Right cardiac atrium (tissue), 5 donors: ENCODE measurements at regions of chr15 and their contacts with region 1.

Region 1: GRCh38 chr15:85504749-85505676 is 124.6 kb downstream of the AKAP13 start:
- DNase-seq: no peak
- ATAC-seq: peak; percentile 52 to 56
- H3K4me3 ChIP-seq: no peak overlapping the region
- H3K27ac ChIP-seq: peak overlapping the region; percentile 88
- H3K4me1 ChIP-seq: peaks cover 7% of the 10 kb centered on the region
- H3K27me3 ChIP-seq: no peaks in the 10 kb centered on the region

Region 2: DNA sequence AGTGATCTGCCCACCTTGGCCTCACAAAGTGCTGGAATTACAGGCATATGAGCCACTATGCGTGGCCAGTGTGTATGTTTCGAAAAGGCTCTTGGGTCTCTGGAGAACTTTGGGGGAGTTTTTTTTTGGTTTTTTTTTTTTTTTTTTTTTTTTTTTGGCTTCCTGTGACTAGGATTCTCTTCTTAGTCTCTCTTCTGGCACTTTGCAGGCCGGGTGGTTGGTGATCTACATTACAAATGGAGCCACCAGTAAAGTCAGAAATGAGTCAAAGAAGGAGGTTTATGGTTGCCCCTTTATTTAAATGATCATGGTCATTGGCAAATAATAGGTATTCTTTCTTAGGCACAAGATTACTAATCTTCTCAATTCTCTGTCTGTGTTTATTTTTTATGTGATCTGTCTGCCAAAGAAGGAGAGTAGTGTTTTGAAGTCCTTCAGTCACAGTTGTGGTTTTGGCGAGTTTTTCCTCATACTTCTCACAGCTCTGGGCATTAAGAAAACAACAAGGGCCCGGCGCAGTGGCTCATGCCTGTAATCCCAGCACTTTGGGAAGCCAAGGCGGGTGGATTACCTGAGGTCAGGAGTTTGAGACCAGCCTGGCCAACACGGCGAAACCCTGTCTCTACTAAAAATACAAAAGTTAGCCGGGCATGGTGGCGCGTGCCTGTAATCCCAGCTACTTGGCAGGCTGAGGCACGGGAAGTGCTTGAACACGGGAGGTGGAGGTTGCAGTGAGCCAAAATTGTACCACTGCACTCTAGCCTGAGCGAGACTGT is 485.0 kb before region 1 on chr15:
- intact Hi-C with region 1: no loop called
- DNase-seq: no peak
- ATAC-seq: no peak
- H3K4me3 ChIP-seq: no peak overlapping the region
- H3K27ac ChIP-seq: no peak overlapping the region
- H3K4me1 ChIP-seq: peaks cover 2% of the 10 kb centered on the region
- H3K27me3 ChIP-seq: no peaks in the 10 kb centered on the region

Region 3: DNA sequence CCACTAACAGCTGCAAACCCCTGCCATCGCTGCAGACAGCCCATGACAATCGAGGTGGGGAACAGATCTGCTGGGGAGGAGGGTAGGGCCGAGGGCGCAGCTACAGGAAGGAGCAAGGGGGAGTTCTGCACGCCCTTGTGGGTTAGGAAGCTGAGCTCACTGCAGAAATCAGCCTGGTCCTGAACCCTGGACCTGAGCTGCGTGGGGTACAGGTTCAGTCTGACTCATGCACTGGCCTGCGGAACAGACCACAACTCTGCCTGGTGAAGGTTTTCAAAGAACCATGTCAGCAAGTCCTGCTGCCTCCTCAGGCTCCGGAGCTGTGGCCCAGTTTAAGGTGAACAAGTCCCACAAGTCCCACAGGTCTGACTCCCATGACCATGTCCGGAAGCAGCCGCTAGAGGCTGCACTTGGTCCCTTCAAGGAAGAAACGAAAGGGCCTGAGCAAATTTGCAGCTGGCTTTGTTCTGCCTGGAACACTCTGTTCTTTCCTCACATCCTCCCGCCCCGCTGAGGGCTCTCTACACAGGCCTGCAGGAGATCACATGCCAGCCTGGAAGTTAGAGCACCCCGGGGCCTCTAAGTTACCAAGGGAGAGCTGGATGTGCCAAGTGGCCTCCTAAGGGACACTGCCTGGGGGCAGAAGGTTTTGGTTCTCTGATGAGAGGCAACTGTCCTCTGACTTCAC is 174.0 kb before region 1 on chr15:
- intact Hi-C with region 1: loop called in 2 of 4 experiments (anchors 10 kb)
- DNase-seq: peak; percentile 87 to 95 (median 89)
- ATAC-seq: peak; percentile 95
- H3K4me3 ChIP-seq: no peak overlapping the region
- H3K27ac ChIP-seq: peak overlapping the region; percentile 94
- H3K4me1 ChIP-seq: peaks cover 9% of the 10 kb centered on the region
- H3K27me3 ChIP-seq: no peaks in the 10 kb centered on the region

Region 4: DNA sequence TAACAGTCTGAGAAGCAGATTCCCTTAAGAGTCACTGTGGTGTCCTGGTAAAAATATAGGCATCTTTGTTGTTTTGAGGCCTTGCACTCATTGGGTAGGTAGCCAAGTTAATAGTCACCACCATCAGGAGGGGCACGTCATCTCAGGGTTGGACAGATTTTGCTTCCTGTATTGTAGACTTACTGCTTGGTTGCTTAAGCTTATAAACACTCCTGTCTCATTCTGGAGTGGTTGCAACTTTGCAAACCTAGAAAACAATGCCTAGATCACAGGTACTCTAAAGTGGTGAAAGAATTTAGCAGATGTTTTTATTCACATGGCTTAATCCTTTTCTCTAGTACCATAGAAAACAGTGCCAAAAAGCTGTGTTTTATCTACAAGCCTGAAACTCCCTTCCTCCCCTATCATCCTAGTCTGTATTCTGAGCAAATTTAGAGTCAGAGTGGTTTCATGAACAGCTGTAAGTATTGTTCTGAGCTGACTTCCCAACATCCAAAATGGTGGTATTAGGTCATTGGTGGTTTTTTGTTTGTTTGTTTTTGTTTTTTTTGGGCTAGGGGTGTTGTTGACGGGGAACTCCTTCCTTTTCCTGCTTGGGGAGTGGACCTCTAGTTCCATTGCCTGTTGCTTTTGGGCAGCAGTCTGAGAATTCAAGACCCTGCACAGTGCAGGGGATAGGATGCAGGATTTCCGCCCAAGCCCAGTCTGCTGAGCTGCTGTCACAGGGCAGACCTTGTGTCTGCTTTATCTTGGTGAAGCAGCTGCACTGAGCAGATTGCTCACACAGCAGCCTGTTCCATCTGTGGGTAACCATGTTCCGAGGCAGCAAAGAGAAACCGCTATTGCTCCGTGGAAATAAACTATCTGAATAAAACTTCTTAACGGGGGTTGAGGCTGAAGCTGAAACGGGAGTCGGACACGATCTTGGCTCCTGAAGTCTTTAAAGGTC is 77.4 kb after region 1 on chr15:
- intact Hi-C with region 1: loop called in 2 of 4 experiments (anchors 5 to 10 kb)
- DNase-seq: peak; percentile 68 to 87 (median 83)
- ATAC-seq: peak; percentile 78 to 82
- H3K4me3 ChIP-seq: peak overlapping the region; percentile 95
- H3K27ac ChIP-seq: peak overlapping the region; percentile 99
- H3K4me1 ChIP-seq: peaks cover 34% of the 10 kb centered on the region
- H3K27me3 ChIP-seq: no peaks in the 10 kb centered on the region

Region 5: DNA sequence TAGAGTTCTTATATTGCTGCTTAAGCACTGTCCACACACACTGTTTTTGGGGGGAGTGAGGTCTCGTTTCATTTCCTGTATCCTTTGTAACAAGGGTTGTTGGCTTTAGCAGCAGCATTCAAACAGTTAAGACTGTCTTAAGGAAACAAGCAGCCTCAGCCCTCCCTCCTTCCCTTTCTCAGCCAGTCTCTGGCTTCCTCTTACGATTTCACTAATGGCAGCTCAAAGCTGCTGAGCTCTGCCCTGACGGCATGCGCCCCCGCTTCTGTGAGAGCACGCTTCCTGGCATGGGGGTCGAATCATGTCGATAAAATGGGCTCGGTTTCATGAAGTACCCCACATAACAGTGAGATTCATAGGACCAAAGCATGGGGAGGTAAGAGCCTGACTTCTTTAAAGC is 184.7 kb after region 1 on chr15:
- intact Hi-C with region 1: no loop called
- DNase-seq: peak in 2 of 3 donors; percentile 64 to 77
- ATAC-seq: peak; percentile 68 to 73
- H3K4me3 ChIP-seq: peak overlapping the region; percentile 44
- H3K27ac ChIP-seq: peak overlapping the region; percentile 91
- H3K4me1 ChIP-seq: peaks cover 16% of the 10 kb centered on the region
- H3K27me3 ChIP-seq: no peaks in the 10 kb centered on the region

Region 6: DNA sequence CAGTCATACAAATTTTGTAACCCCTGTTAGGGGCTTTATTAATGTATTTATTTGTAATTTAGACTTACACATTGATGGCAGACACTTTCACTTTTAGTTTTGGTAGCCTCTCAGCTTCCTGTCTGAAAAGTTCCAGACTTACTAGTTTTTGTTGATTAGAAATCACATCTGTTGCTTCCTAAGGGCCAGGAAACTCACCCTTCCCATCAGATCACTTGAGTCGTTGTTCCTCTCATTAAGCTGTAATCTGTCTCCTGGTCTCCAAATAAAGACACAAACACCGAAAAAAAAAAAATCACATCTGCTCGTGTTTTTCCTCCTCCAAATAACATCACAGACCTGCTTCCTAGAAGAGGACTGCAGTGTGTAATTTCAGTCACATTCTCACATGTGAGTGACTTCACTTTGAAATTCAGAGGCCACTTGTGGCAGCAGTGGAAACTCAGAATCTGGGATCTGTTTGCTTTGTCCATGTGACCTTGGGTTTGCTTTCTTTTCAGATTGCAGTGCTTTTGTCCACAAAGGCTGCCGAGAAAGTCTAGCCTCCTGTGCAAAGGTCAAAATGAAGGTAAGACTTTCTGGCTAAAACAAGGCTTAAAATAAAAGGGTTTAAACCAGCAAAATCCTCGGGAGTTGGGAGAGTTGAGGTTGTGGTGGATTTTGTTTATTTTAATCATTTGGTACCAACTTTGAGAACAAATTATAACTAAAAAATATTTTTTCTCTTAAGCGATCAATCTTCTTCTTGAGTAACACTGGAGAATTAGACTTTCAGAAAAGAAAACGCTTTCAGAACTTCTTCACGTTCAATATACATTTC is 202.7 kb after region 1 on chr15:
- intact Hi-C with region 1: loop called in 1 of 4 experiments (anchors 10 kb)
- DNase-seq: peak in 1 of 3 donors; percentile 21
- ATAC-seq: peak; percentile 53 to 60
- H3K4me3 ChIP-seq: peak overlapping the region; percentile 12
- H3K27ac ChIP-seq: peak overlapping the region; percentile 98
- H3K4me1 ChIP-seq: peaks cover 17% of the 10 kb centered on the region
- H3K27me3 ChIP-seq: no peaks in the 10 kb centered on the region